ENCODE measurements at regions of chr1 and their contacts with region 1.

Region 1: DNA sequence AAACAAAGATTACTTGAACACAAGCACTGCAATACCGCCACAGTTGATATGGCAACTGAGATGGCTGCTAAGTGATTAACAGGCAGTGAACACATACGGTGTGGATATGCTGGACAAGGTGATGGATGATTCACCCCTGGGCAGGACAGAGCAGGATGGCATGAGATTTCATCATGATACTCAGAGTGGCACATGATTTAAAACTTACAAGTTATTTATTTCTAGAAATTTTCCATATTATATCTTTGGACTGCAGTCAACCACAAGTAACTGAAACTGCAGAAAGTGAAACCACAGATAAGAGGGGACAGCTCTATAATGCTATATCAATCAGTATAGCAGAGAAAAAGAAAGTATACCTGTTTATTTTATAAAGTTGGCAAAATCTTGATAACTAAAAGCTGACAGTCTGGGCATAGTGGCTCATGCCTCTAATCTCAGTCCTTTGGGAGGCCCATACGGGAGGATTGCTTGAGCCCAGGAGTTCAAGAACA is 47.9 kb downstream of the PHACTR4 start:
- DNase-seq: no peak
- H3K4me3 ChIP-seq: no peak overlapping the region
- H3K4me1 ChIP-seq: peaks cover 12% of the 10 kb centered on the region
- H3K27me3 ChIP-seq: no peaks in the 10 kb centered on the region

Region 2: GRCh38 chr1:28860332-28861073 is 443.0 kb after region 1 on chr1:
- in situ Hi-C with region 1: loop called (anchors 25 kb)
- DNase-seq: no peak
- H3K4me3 ChIP-seq: no peak overlapping the region
- H3K4me1 ChIP-seq: peaks cover 9% of the 10 kb centered on the region
- H3K27me3 ChIP-seq: no peaks in the 10 kb centered on the region

Measured in HAP-1 (cell line).